ENCODE measurements at regions of chr5 and their contacts with region 1.

Region 1: DNA sequence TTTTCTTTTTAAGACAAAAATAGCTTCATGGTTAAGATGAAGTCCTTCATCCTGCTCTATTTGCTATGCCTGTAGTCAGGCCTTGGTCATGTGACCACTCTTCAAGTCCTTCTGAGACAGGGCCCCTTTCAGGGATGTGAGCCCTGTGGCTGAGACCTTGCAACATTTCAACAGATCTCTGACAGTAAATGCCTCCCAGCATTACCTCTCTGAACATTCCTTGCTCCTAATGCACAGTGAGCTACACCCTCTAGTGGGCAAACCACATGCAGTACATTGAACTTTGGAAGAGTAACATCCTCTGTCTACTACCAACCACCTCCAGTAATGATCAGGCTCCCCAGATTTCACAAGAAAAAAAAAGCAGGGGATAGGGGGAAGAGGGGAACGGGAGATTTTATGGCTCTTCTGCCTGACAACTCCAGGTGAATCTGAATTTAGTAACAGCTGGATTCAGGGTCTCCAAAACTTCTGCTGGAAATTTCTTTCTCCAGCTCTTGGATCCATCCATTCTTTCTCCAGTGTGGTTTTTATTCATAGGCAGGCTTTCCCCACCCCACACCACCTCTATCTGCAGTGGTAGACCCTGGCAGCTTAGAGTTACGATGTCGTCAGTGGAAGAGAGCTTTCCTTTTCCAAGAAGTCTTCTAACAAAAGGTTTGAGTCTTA is 8.9 kb upstream of the FBXO38 start:
- DNase-seq: peak in 4 of 9 experiments; percentile 5 to 42 (median 20)
- ATAC-seq: peak; percentile 49
- H3K4me3 ChIP-seq: no peak overlapping the region
- H3K4me3 Mint-ChIP-seq: no peak overlapping the region
- H3K27ac ChIP-seq: no peak overlapping the region
- H3K27ac Mint-ChIP-seq: no peak overlapping the region
- H3K4me1 ChIP-seq: no peaks in the 10 kb centered on the region
- H3K4me1 Mint-ChIP-seq: peaks cover 7% of the 10 kb centered on the region
- H3K27me3 ChIP-seq: no peaks in the 10 kb centered on the region
- H3K27me3 Mint-ChIP-seq: no peaks in the 10 kb centered on the region
- CTCF ChIP-seq: peak; percentile 30

Region 2: GRCh38 chr5:147369742-147370374 is 1005.0 kb before region 1 on chr5:
- CTCF ChIA-PET with region 1: no interaction called
- POLR2A ChIA-PET with region 1: no interaction called
- intact Hi-C with region 1: no loop called
- DNase-seq: no peak
- ATAC-seq: no peak
- H3K4me3 ChIP-seq: no peak overlapping the region
- H3K4me3 Mint-ChIP-seq: no peak overlapping the region
- H3K27ac ChIP-seq: no peak overlapping the region
- H3K27ac Mint-ChIP-seq: no peak overlapping the region
- H3K4me1 ChIP-seq: no peaks in the 10 kb centered on the region
- H3K4me1 Mint-ChIP-seq: no peaks in the 10 kb centered on the region
- H3K27me3 ChIP-seq: no peaks in the 10 kb centered on the region
- H3K27me3 Mint-ChIP-seq: peaks cover 5% of the 10 kb centered on the region
- CTCF ChIP-seq: no peak

Region 3: GRCh38 chr5:147949711-147950573 is 424.9 kb before region 1 on chr5:
- CTCF ChIA-PET with region 1: no interaction called
- POLR2A ChIA-PET with region 1: no interaction called
- intact Hi-C with region 1: loop called in 1 of 2 experiments (anchors 5 kb)
- DNase-seq: peak in 2 of 9 experiments; percentile 5
- ATAC-seq: no peak
- H3K4me3 ChIP-seq: no peak overlapping the region
- H3K4me3 Mint-ChIP-seq: no peak overlapping the region
- H3K27ac ChIP-seq: no peak overlapping the region
- H3K27ac Mint-ChIP-seq: no peak overlapping the region
- H3K4me1 ChIP-seq: no peaks in the 10 kb centered on the region
- H3K4me1 Mint-ChIP-seq: no peaks in the 10 kb centered on the region
- H3K27me3 ChIP-seq: no peaks in the 10 kb centered on the region
- H3K27me3 Mint-ChIP-seq: peaks cover 5% of the 10 kb centered on the region
- CTCF ChIP-seq: peak; percentile 47

Region 4: GRCh38 chr5:148179234-148179824 is 195.5 kb before region 1 on chr5:
- CTCF ChIA-PET with region 1: interaction called, 10 read pairs
- POLR2A ChIA-PET with region 1: no interaction called
- intact Hi-C with region 1: loop called in 1 of 2 experiments (anchors 2 kb)
- DNase-seq: peak in 3 of 9 experiments; percentile 5 to 64 (median 51)
- ATAC-seq: no peak
- H3K4me3 ChIP-seq: no peak overlapping the region
- H3K4me3 Mint-ChIP-seq: no peak overlapping the region
- H3K27ac ChIP-seq: no peak overlapping the region
- H3K27ac Mint-ChIP-seq: no peak overlapping the region
- H3K4me1 ChIP-seq: no peaks in the 10 kb centered on the region
- H3K4me1 Mint-ChIP-seq: no peaks in the 10 kb centered on the region
- H3K27me3 ChIP-seq: no peaks in the 10 kb centered on the region
- H3K27me3 Mint-ChIP-seq: peaks cover 12% of the 10 kb centered on the region
- CTCF ChIP-seq: peak; percentile 62

Region 5: DNA sequence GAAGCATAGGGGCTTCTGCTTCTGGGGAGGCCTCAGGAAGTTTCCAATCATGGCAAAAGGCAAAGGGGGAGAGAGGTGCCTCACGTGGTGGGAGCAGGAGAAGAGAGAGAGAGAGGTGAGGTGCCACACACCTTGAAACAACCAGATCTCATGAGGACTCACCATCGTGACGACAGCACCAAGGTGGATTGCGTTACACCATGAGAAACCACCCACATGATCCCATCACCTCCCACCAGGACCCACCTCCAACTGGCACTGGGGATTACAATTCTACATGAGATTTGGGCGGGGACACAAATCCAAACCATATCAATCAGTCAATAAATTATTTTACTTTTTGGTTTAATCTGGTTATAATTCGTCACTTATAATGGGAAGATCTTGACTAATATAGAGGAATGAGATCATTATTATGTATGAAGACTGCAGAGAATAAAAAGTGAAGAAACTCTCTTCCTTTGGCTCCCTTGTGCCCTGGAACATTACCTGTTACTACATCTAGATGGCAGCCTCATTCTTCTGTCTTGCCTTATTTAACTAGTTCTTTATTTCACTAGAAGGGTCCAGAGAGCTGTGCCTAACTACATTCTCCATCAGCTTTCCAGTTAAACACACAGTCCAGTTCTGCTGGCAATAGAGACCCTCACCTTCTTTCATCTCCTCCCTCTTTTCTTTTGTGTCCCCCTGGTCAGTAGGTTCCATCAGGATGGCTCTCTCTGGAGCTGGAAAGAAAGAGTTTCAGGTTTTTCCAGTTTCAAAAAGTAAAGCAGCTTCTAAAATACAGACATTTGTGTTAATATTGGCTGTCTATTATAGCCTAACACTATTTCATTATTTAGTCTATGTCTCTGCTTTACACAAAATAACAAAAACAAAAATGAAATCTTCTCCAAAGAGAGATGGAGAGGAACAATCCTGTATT is 84.3 kb before region 1 on chr5:
- CTCF ChIA-PET with region 1: interaction called, 12 read pairs
- POLR2A ChIA-PET with region 1: no interaction called
- intact Hi-C with region 1: loop called in 1 of 2 experiments (anchors 2 kb)
- DNase-seq: peak in 2 of 9 experiments; percentile 3 to 24
- ATAC-seq: no peak
- H3K4me3 ChIP-seq: no peak overlapping the region
- H3K4me3 Mint-ChIP-seq: no peak overlapping the region
- H3K27ac ChIP-seq: no peak overlapping the region
- H3K27ac Mint-ChIP-seq: no peak overlapping the region
- H3K4me1 ChIP-seq: no peaks in the 10 kb centered on the region
- H3K4me1 Mint-ChIP-seq: no peaks in the 10 kb centered on the region
- H3K27me3 ChIP-seq: no peaks in the 10 kb centered on the region
- H3K27me3 Mint-ChIP-seq: peaks cover 7% of the 10 kb centered on the region
- CTCF ChIP-seq: peak; percentile 26

Region 6: GRCh38 chr5:148314204-148314603 is 60.6 kb before region 1 on chr5:
- CTCF ChIA-PET with region 1: interaction called, 10 read pairs
- POLR2A ChIA-PET with region 1: no interaction called
- intact Hi-C with region 1: loop called (anchors 5 kb)
- DNase-seq: peak in 1 of 9 experiments; percentile 2
- ATAC-seq: no peak
- H3K4me3 ChIP-seq: no peak overlapping the region
- H3K4me3 Mint-ChIP-seq: no peak overlapping the region
- H3K27ac ChIP-seq: no peak overlapping the region
- H3K27ac Mint-ChIP-seq: no peak overlapping the region
- H3K4me1 ChIP-seq: no peaks in the 10 kb centered on the region
- H3K4me1 Mint-ChIP-seq: no peaks in the 10 kb centered on the region
- H3K27me3 ChIP-seq: no peaks in the 10 kb centered on the region
- H3K27me3 Mint-ChIP-seq: peaks cover 2% of the 10 kb centered on the region
- CTCF ChIP-seq: no peak

Measured in CD8-positive, alpha-beta T cell (primary cell).